ENCODE measurements at regions of chr1 and their contacts with region 1.

Region 1: GRCh38 chr1:10430216-10431069 is at the start of gene CENPS:
- DNase-seq: peak; percentile 67 to 96 (median 76)

Region 2: GRCh38 chr1:9874959-9875635 is 555.3 kb before region 1 on chr1:
- intact Hi-C with region 1: loop called (anchors 2 kb)
- DNase-seq: peak; percentile 56 to 96 (median 78)

Region 3: DNA sequence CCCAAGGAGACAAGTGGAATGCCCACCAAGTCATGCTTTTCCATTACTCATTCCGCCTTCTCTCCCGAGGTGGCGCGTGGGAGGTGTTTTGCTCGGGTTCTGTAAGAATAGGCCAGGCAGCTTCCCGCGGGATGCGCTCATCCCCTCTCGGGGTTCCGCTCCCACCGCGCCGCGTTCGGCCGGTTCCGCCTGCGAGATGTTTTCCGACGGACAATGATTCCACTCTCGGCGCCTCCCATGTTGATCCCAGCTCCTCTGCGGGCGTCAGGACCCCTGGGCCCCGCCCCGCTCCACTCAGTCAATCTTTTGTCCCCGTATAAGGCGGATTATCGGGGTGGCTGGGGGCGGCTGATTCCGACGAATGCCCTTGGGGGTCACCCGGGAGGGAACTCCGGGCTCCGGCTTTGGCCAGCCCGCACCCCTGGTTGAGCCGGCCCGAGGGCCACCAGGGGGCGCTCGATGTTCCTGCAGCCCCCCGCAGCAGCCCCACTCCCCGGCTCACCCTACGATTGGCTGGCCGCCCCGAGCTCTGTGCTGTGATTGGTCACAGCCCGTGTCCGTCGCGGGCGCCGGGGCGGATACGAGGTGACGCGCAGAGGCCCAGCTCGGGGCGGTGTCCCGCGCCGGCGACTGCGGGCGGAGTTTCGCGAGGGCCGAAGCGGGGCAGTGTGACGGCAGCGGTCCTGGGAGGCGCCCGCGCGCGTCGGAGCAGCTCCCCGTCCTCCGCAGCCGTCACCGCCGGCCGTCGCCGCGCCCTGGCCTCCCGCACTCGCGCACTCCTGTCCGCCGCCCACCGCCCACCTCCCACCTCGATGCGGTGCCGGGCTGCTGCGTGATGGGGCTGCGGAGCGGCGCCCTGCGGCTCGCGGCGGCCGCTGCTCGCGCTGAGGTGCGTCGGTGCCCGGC is 220.3 kb before region 1 on chr1 and contains the start of gene KIF1B:
- intact Hi-C with region 1: loop called (anchors 2 kb)
- DNase-seq: peak; percentile 98 to 100 (median 99)

Region 4: DNA sequence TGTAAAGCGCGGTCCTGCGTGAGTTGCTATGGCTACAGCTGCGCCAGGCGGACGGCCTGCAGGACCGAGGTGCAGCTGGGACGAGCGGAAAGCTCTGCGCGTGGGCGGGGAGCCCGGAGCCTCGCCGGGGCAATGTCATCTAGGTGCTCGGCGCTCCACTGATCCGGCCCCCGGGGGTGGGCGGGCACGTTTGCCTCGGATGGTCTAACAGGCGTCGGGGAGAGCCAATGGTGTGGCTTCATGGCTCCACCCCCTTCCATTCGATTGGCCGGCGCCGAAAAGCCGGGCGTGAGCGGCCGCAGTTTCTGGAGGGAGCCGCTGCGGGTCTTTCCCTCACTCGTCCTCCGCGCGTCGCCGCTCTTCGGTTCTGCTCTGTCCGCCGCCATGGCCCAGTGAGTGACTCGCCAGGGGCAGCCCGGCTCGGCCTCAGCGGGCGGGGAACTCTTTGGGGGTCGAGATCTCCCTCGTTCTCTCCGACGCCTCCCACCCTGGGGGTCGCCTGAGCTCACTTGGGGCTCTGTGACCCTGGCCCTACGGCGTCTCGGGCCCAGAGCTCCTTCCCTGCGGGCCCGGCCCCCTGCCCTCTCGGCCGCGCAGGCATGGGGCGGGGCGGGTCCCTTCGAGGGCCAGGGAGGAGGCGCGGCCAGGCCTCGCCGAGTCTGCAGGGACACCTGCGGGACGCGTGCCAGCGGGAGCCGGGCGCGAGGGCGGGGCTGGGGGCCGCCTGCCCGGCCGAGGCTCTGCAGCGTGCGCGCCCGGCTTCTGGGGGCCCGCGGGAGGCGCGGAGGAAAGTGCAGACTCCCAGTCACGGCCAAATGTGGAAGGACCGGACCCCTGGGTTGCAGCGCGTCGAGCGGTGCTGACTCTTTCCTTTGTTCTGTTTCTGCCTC is 31.5 kb before region 1 on chr1 and contains the start of gene PGD:
- intact Hi-C with region 1: loop called (anchors 2 kb)
- DNase-seq: peak; percentile 96 to 100 (median 99)

Region 5: DNA sequence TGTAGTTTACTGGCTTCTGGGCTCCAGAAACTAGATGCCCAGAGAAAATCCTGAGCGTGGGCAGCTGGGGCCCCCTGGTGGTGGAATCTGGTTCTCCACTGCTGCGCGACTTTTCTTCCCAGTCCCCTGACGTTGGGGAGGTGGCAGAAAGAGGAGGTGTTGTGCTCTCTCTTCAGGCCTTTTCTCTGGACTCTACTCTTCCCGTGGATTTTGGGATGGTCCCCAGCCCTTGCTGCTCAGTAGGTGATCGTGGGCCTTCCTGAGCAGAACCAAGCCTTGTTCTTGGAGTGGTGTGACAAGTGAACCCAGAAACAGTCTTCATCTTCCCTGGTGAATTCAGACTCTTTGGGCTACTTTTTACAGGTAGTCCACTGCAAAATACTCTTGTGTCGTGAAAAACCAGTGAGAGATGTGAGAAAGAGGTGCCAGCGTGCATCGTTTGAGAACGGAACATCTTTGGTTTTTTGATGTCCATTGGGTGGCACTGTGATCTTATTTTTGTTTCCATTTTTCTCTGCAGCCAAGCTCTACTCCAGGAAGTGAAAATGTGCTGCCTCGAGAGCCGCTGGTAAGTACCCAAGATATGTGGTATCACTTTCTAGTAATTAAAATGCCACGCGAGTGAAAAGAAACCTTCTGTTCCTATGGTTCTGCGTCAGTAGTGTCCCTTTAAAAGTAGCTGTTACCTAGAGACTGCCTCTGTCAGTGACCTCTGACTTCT is 64.5 kb after region 1 on chr1:
- intact Hi-C with region 1: loop called (anchors 1 kb)
- DNase-seq: peak; percentile 61 to 97 (median 88)

Region 6: GRCh38 chr1:10917513-10918454 is 487.3 kb after region 1 on chr1:
- intact Hi-C with region 1: no loop called
- DNase-seq: peak in 2 of 10 donors; percentile 9 to 20

Measured in posterior cingulate gyrus (tissue), 11 donors.